ENCODE measurements at regions of chr7 and their contacts with region 1.

Region 1: GRCh38 chr7:26954951-26955350 is 90.6 kb upstream of the SKAP2 start:
- DNase-seq: no peak
- H3K4me3 Mint-ChIP-seq: no peak overlapping the region
- H3K27ac Mint-ChIP-seq: no peak overlapping the region
- H3K4me1 Mint-ChIP-seq: peaks cover 15% of the 10 kb centered on the region
- H3K27me3 Mint-ChIP-seq: no peaks in the 10 kb centered on the region
- CTCF ChIP-seq: no peak

Region 2: GRCh38 chr7:26843705-26844104 is 111.2 kb before region 1 on chr7:
- CTCF ChIA-PET with region 1: no interaction called
- intact Hi-C with region 1: no loop called
- DNase-seq: no peak
- H3K4me3 Mint-ChIP-seq: no peak overlapping the region
- H3K27ac Mint-ChIP-seq: no peak overlapping the region
- H3K4me1 Mint-ChIP-seq: no peaks in the 10 kb centered on the region
- H3K27me3 Mint-ChIP-seq: no peaks in the 10 kb centered on the region
- CTCF ChIP-seq: no peak

Region 3: DNA sequence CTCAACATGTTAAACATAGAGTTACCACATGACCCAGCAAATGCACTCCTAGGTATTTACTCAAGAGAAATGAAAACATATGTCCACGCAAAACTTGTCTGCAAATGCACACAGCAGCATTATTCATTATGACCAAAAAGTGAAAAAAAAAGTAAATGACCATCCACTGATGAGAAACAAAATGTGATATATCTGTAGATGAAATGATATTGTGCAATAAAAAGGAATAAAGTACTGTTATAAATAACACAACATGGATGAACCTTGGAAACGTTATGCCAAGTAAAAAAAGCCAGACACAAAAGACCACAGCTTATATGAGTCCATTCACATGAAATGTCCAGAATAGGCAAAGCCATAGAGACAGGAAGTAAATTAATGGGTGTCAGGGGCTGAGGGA is 29.2 kb before region 1 on chr7:
- CTCF ChIA-PET with region 1: no interaction called
- intact Hi-C with region 1: no loop called
- DNase-seq: no peak
- H3K4me3 Mint-ChIP-seq: no peak overlapping the region
- H3K27ac Mint-ChIP-seq: no peak overlapping the region
- H3K4me1 Mint-ChIP-seq: no peaks in the 10 kb centered on the region
- H3K27me3 Mint-ChIP-seq: no peaks in the 10 kb centered on the region
- CTCF ChIP-seq: no peak

Region 4: GRCh38 chr7:26937939-26938623 is 16.9 kb before region 1 on chr7:
- CTCF ChIA-PET with region 1: interaction called, 11 read pairs
- intact Hi-C with region 1: no loop called
- DNase-seq: peak; percentile 26
- H3K4me3 Mint-ChIP-seq: no peak overlapping the region
- H3K27ac Mint-ChIP-seq: no peak overlapping the region
- H3K4me1 Mint-ChIP-seq: peaks cover 10% of the 10 kb centered on the region
- H3K27me3 Mint-ChIP-seq: no peaks in the 10 kb centered on the region
- CTCF ChIP-seq: no peak

Measured in Calu3 (cell line).